Esophagus muscularis mucosa (tissue), 4 donors: ENCODE measurements at regions of chr6 and their contacts with region 1.

Region 1: GRCh38 chr6:36350681-36351571 is 14.2 kb upstream of the BNIP5 start:
- DNase-seq: no peak
- H3K4me3 ChIP-seq: no peak overlapping the region
- H3K27ac ChIP-seq: peak overlapping the region in 1 of 4 donors; percentile 42
- H3K4me1 ChIP-seq: peaks cover 0 to 13% (median 5%) of the 10 kb centered on the region in 4 donors
- H3K27me3 ChIP-seq: peaks cover 0 to 10% (median 0%) of the 10 kb centered on the region in 4 donors
- CTCF ChIP-seq: no peak
- EP300 ChIP-seq: peak; percentile 18
- POLR2A ChIP-seq: no peak

Region 2: DNA sequence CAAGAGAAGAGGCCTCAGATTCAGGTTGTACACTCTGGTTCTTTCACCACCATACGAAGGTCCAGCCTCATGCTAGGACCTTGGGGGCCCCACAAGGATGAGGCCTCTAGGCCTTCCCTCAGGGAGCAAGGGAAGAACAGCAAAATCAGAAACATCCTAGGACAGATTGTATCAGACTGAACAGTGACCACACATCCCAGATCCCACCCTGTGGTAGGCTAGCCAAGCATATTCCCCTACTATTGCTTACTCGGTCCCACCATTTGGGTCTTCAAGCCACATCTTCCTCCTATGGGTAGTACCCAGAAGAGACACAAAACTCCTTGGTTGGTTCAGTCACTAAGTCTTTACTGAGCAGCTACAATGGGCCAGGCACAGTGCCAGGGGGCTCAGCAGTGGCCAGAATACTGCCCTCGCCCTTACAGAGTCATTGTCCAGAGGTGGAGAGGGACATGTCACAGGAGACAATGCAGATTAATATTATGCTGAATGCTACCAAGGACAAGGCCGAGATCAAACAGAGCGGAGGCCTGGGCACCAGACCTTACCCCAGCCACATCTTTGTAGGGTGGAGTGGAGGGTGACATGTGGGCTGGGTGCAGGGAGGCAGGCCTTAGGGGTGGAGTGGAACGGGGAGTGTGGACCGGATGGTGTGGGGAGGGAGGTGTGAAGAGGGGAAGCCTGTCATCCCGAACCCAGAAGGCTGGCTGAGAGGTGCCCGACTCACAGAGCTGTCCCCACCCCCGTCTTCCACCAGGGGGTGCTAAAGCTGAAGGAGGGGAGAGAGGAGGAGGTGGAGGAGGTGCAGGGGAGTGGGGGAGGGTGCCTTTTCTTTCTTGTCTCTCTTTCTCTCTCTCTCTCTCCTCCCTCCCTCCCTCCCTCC is 227.4 kb before region 1 on chr6:
- intact Hi-C with region 1: loop called (anchors 10 kb)
- DNase-seq: peak; percentile 96
- H3K4me3 ChIP-seq: peak overlapping the region in 2 of 4 donors; percentile 18 to 21
- H3K27ac ChIP-seq: no peak overlapping the region
- H3K4me1 ChIP-seq: peaks cover 20 to 30% (median 29%) of the 10 kb centered on the region in 4 donors
- H3K27me3 ChIP-seq: peaks cover 0 to 22% (median 0%) of the 10 kb centered on the region in 4 donors
- CTCF ChIP-seq: peak; percentile 69 to 84 (median 76)
- EP300 ChIP-seq: no peak
- POLR2A ChIP-seq: no peak